ENCODE measurements at regions of chr12 and their contacts with region 1.

Region 1: GRCh38 chr12:112061137-112061536 is 47.4 kb downstream of the NAA25 start:
- DNase-seq: no peak
- ATAC-seq: no peak
- H3K4me3 ChIP-seq: no peak overlapping the region
- H3K27ac ChIP-seq: no peak overlapping the region
- H3K4me1 ChIP-seq: peaks cover 0 to 4% (median 0%) of the 10 kb centered on the region in 12 donors
- H3K27me3 ChIP-seq: no peaks in the 10 kb centered on the region
- CTCF ChIP-seq: no peak
- POLR2A ChIP-seq: no peak

Region 2: DNA sequence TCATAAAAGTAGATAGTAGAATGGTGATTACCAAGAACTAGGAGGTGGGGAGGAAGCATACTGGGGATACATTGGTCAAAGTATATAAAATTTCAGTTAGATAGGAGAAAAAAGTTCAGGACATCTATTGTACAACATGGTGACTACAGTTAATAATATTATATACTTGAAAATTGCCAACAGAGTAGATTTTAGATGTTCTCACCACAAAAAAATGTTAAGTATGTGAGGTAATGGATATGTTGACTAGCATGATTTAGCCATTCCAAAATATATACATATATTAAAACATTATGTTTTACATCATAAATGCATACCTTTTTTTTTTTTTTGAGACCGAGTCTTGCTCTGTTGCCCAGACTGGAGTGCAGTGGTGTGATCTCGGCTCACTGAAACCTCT is 79.2 kb before region 1 on chr12:
- intact Hi-C with region 1: no loop called
- DNase-seq: no peak
- ATAC-seq: no peak
- H3K4me3 ChIP-seq: no peak overlapping the region
- H3K27ac ChIP-seq: no peak overlapping the region
- H3K4me1 ChIP-seq: peaks cover 0 to 3% (median 0%) of the 10 kb centered on the region in 12 donors
- H3K27me3 ChIP-seq: no peaks in the 10 kb centered on the region
- CTCF ChIP-seq: no peak
- POLR2A ChIP-seq: no peak

Region 3: GRCh38 chr12:112243255-112244110 is 182.3 kb after region 1 on chr12:
- intact Hi-C with region 1: loop called in 1 of 10 experiments (anchors 10 kb)
- DNase-seq: no peak
- ATAC-seq: no peak
- H3K4me3 ChIP-seq: no peak overlapping the region
- H3K27ac ChIP-seq: no peak overlapping the region
- H3K4me1 ChIP-seq: no peaks in the 10 kb centered on the region
- H3K27me3 ChIP-seq: no peaks in the 10 kb centered on the region
- CTCF ChIP-seq: no peak
- POLR2A ChIP-seq: no peak

Measured in heart left ventricle (tissue), 16 donors.